ENCODE measurements at regions of chr3 and their contacts with region 1.

Region 1: GRCh38 chr3:30644593-30645012 is 38.2 kb downstream of the TGFBR2 start:
- DNase-seq: peak; percentile 77
- H3K4me3 Mint-ChIP-seq: peak overlapping the region; percentile 59
- H3K27ac Mint-ChIP-seq: peak overlapping the region; percentile 94
- H3K4me1 Mint-ChIP-seq: peaks cover 96% of the 10 kb centered on the region
- H3K27me3 Mint-ChIP-seq: no peaks in the 10 kb centered on the region

Region 2: DNA sequence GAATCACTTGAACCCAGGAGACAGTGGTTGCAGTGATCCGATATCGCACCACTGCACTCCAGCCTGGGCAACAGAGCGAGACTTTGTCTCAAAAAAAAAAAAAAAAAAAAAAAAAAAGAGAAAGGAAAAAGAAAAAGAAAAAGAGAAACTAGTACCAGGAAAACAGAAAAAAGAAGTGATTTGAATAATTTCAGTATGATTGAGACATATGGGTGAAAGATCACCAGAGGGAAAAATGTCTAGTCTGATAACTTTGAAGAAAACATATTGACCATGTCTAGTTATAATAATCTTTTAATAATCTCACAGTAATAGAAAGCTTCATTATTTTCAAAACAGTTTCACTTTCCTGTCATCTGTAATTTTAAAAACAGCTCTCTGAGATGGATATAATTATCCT is 21.8 kb before region 1 on chr3:
- CTCF ChIA-PET with region 1: interaction called, 3 read pairs
- POLR2A ChIA-PET with region 1: interaction called, 10 read pairs
- DNase-seq: no peak
- H3K4me3 Mint-ChIP-seq: peak overlapping the region; percentile 54
- H3K27ac Mint-ChIP-seq: peak overlapping the region; percentile 83
- H3K4me1 Mint-ChIP-seq: peaks cover 92% of the 10 kb centered on the region
- H3K27me3 Mint-ChIP-seq: no peaks in the 10 kb centered on the region

Region 3: DNA sequence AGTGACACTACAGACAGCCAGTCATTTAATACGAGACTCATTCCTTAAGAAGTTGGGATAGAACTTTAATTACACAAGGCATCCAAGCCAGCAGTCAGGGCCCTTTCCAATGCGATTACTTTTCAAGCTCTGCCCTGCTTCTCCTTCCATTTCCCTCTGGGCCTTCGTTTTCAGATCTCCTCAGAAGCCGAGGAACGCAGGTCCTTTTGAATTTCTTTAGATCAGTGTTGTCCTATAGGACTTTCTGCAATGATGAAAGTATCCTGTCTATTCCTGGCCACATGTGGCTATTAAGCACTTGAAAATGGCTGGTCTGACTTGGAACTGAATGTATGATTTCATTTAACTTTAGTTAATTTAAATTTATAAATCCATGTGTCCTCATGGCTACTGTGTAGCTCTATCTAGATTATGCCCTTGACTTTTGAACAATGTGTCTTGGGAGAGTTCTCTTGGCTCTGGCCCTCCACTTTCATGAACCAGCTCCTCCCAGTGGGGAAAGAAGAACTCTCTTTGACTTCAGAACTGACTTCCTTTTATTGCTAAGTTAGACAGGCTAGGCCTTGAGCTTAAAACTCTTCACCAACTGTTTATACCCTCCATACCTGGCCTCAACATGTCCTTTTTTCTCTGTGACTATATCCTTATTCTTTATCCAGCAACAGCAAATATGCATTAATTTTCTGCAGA is 15.6 kb before region 1 on chr3:
- CTCF ChIA-PET with region 1: interaction called, 13 read pairs
- POLR2A ChIA-PET with region 1: no interaction called
- DNase-seq: peak; percentile 49
- H3K4me3 Mint-ChIP-seq: peak overlapping the region; percentile 49
- H3K27ac Mint-ChIP-seq: peak overlapping the region; percentile 97
- H3K4me1 Mint-ChIP-seq: peaks cover 93% of the 10 kb centered on the region
- H3K27me3 Mint-ChIP-seq: no peaks in the 10 kb centered on the region